Calu3 (cell line): ENCODE measurements at regions of chr2 and their contacts with region 1.

Region 1: DNA sequence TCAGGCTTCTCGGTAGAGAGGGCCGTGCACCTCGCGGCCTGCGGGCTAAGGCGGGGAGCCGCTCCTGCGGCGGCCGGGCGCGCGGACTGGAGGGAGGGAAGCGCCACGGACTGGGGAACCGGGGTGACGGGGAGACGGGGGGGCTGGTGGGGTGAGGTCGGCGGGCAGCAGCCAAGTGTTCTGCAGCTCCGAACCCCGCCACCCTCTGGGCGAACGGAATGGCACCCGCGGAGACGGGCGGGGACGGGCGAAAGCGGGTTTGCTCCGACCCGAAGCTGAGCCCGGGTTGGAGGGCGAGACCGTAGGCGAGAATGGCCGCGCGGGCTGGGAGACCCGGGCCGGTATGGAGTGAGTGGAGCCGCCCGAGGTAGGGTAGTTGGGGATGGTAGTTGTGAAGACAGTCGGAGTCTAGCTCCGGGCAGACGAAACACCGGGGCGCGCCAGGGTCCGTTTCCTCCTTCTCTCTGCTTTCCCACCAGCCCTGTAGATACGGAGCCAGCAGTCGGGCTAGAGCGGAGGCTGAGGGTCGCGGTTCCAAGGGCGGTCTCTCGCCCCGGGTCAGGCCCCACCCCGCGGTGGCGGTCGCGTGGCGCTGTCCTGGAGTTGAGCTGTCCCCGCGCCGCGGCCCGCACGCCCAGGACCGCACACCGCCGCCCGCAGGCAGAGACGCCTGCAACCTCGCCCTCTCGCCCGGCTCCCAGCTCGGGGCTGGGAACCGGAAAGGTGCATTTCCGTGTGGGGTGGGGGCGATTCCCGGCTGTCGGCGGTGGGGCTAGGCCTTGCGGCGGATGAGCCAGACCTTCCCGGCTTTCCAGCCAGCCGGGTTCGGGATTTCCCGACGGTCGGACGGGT is 160.3 kb upstream of the SIX2 start:
- DNase-seq: peak; percentile 55
- H3K4me3 Mint-ChIP-seq: peak overlapping the region; percentile 88
- H3K27ac Mint-ChIP-seq: no peak overlapping the region
- H3K4me1 Mint-ChIP-seq: no peaks in the 10 kb centered on the region
- H3K27me3 Mint-ChIP-seq: no peaks in the 10 kb centered on the region
- CTCF ChIP-seq: no peak

Region 2: DNA sequence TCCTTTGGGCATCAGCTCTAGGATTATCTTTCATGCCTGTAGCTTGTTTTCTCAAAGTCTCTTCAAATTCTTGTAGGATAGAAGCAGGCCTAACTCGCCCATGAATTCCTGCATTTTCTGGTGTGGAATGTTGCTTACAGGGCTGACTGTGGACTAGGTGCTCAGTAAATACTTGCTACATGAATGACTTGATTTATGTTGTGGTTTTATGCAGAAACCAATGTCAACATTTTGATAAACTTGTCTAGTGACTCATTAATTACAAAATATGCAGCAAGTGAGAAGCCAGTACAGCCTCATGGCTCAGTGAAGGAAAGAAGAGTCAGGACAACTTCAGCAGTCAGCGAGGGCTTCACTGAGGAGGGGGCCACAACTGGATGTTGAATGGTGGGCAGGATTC is 49.7 kb before region 1 on chr2:
- CTCF ChIA-PET with region 1: no interaction called
- intact Hi-C with region 1: loop called (anchors 5 kb)
- DNase-seq: peak; percentile 46
- H3K4me3 Mint-ChIP-seq: peak overlapping the region; percentile 39
- H3K27ac Mint-ChIP-seq: peak overlapping the region; percentile 84
- H3K4me1 Mint-ChIP-seq: peaks cover 48% of the 10 kb centered on the region
- H3K27me3 Mint-ChIP-seq: no peaks in the 10 kb centered on the region
- CTCF ChIP-seq: no peak